Panc1 (cell line): ENCODE measurements at regions of chr15 and their contacts with region 1.

Region 1: DNA sequence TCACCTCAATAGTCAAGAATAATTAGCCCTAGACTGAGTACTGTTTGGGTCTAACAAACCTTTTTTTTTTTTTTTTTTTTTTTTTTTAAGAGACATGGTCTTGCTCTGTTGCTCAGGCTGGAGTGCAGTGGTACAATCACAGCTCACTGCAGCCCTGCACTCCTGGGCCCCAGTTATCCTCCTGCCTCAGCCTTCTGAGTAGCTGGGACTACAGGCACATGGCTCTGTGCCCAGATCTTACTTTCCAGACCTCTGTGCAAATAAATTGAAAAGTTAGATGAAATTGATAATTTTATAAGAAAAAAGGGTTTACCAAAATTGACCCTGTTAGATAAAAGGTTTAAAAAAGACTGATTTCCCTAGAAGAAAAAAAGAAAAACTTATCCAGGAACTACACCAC is 79.0 kb downstream of the NR2E3 start:
- DNase-seq: no peak
- ATAC-seq: no peak
- H3K4me3 ChIP-seq: no peak overlapping the region
- H3K27ac ChIP-seq: no peak overlapping the region
- H3K4me1 ChIP-seq: no peaks in the 10 kb centered on the region
- H3K27me3 ChIP-seq: no peaks in the 10 kb centered on the region
- CTCF ChIP-seq: no peak

Region 2: DNA sequence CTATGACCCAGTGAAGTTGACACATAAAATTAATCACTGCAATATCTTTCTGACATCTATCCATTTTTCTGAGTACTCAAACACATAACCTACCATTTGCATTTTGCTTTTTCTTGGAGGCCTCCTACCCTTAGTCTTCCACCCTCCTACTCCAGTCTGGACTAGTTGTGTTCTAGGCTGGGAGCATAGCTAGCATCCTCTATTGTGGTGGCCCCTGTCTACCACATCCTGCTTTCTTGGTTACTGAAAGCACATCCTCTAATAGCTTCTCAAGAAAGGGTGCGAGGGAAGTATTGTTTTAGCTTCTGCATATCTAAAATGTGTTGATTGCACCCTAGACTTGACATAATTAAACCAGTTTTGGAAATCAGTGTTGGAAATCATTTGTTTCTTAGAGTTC is 597.7 kb before region 1 on chr15:
- CTCF ChIA-PET with region 1: no interaction called
- POLR2A ChIA-PET with region 1: no interaction called
- in situ Hi-C with region 1: no loop called
- intact Hi-C with region 1: no loop called
- DNase-seq: no peak
- ATAC-seq: no peak
- H3K4me3 ChIP-seq: no peak overlapping the region
- H3K27ac ChIP-seq: peak overlapping the region; percentile 25; the same call in 1 of the 2 replicates
- H3K4me1 ChIP-seq: peaks cover 65% of the 10 kb centered on the region
- H3K27me3 ChIP-seq: no peaks in the 10 kb centered on the region
- CTCF ChIP-seq: no peak

Region 3: DNA sequence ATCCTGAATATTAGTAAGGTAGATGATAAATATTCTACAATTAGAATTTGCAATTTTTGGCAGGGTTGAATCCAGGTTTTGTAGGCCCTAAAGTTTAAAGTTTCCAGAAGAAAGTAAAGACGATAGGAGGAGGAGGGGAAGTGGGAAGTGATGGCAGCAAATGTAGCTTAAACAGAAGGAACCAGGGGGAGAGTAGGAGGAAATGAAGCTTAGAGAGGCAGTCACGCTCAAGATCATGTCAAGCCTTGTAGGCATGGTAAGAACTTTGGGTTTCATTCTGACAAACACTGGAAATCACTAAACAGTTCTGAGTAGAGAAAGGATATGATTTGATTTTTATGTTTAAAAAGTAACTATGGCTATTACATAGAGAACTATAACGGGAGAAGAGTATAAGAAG is 15.1 kb before region 1 on chr15:
- CTCF ChIA-PET with region 1: no interaction called
- POLR2A ChIA-PET with region 1: interaction called, 13 read pairs
- in situ Hi-C with region 1: no loop called
- intact Hi-C with region 1: no loop called
- DNase-seq: no peak
- ATAC-seq: no peak
- H3K4me3 ChIP-seq: no peak overlapping the region
- H3K27ac ChIP-seq: no peak overlapping the region
- H3K4me1 ChIP-seq: no peaks in the 10 kb centered on the region
- H3K27me3 ChIP-seq: no peaks in the 10 kb centered on the region
- CTCF ChIP-seq: no peak